ENCODE measurements at regions of chr12 and their contacts with region 1.

Region 1: GRCh38 chr12:75480469-75480949 is at the start of gene GLIPR1:
- DNase-seq: peak; percentile 54 to 83 (median 76)
- ATAC-seq: peak; percentile 86
- H3K4me3 ChIP-seq: peak within 1 kb of the TSS; percentile 82
- H3K4me3 Mint-ChIP-seq: peak within 1 kb of the TSS; percentile 86 to 99 (median 97)
- H3K27ac ChIP-seq: peak within 1 kb of the TSS; percentile 73
- H3K27ac Mint-ChIP-seq: peak within 1 kb of the TSS; percentile 92 to 100 (median 97)
- H3K4me1 ChIP-seq: peaks cover 49 to 54% of the 10 kb centered on the region in 2 donors
- H3K4me1 Mint-ChIP-seq: peaks cover 50 to 85% (median 75%) of the 10 kb centered on the region in 7 donors
- H3K27me3 ChIP-seq: no peaks in the 10 kb centered on the region
- H3K27me3 Mint-ChIP-seq: no peaks in the 10 kb centered on the region
- total RNA-seq, gene GLIPR1: 28.2 to 132 (median 48.7) TPM

Region 2: DNA sequence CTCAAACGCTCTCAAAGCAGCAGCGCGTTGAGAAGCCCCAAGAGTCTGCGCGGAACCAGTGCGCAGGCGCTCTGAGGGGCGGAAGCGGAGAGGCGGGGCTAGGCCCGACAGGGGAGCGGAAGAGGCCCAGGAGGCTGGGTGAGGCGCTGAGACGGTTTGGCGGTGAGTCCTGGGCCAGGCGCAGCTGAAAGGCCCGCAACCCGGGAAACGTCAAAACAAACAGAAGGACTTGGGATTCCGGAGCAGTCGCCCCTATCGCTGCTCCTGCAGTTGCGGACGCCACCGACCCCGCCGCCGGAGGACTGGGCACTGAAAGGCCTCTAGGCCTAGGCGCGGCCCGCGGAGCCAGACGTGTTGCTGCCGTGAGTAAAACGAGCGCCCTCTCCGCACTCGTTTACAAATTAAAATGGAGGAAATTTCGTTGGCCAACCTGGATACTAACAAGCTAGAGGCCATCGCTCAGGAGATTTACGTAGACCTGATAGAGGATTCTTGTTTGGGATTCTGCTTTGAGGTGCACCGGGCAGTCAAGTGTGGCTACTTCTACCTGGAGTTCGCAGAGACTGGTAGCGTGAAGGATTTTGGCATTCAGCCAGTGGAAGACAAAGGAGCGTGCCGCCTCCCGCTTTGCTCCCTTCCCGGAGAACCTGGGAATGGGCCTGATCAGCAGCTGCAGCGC is 942.7 kb before region 1 on chr12 and contains the start of gene ATXN7L3B:
- CTCF ChIA-PET with region 1: no interaction called
- POLR2A ChIA-PET with region 1: no interaction called
- intact Hi-C with region 1: loop called in 1 of 2 experiments (anchors 5 kb)
- DNase-seq: peak; percentile 94 to 98 (median 97)
- ATAC-seq: peak; percentile 97
- H3K4me3 ChIP-seq: peak within 1 kb of the TSS; percentile 85
- H3K4me3 Mint-ChIP-seq: peak within 1 kb of the TSS; percentile 87 to 99 (median 97)
- H3K27ac ChIP-seq: peak within 1 kb of the TSS; percentile 94
- H3K27ac Mint-ChIP-seq: peak within 1 kb of the TSS; percentile 96 to 100 (median 99)
- H3K4me1 ChIP-seq: peaks cover 27 to 32% of the 10 kb centered on the region in 2 donors
- H3K4me1 Mint-ChIP-seq: peaks cover 39 to 60% (median 54%) of the 10 kb centered on the region in 7 donors
- H3K27me3 ChIP-seq: no peaks in the 10 kb centered on the region
- H3K27me3 Mint-ChIP-seq: no peaks in the 10 kb centered on the region
- total RNA-seq, gene ATXN7L3B: 25.6 to 51.6 (median 46.9) TPM

Region 3: DNA sequence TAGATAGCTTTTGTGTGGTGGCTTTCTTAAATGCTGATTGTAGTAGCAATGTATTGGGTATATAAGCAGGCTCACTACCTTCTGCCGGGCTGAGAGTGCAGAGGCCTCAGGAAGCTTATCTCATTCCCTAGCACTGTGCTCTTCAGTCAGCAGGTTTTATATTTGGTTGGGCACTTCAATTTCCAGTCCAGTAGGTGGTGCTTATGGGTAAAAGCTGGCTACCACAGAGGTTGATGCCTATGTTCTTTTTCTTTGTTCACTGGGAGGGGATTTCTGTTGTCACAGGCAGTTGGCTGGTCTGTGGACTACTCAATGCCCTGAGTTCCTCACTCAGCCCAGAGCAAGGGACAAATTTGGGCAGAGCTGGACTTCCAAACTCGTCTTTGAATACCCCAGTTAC is 42.9 kb before region 1 on chr12:
- CTCF ChIA-PET with region 1: interaction called, 3 read pairs
- POLR2A ChIA-PET with region 1: no interaction called
- intact Hi-C with region 1: loop called (anchors 2 kb)
- DNase-seq: peak in 3 of 9 donors; percentile 9 to 39 (median 11)
- ATAC-seq: peak; percentile 89
- H3K4me3 ChIP-seq: no peak overlapping the region
- H3K4me3 Mint-ChIP-seq: no peak overlapping the region
- H3K27ac ChIP-seq: no peak overlapping the region
- H3K27ac Mint-ChIP-seq: peak overlapping the region in 1 of 9 donors; percentile 6
- H3K4me1 ChIP-seq: peaks cover 0 to 6% of the 10 kb centered on the region in 2 donors
- H3K4me1 Mint-ChIP-seq: peaks cover 0 to 14% (median 0%) of the 10 kb centered on the region in 7 donors
- H3K27me3 ChIP-seq: no peaks in the 10 kb centered on the region
- H3K27me3 Mint-ChIP-seq: peaks cover 5 to 18% (median 12%) of the 10 kb centered on the region in 5 donors

Region 4: GRCh38 chr12:75505706-75506312 is 25.3 kb after region 1 on chr12:
- CTCF ChIA-PET with region 1: interaction called, 19 read pairs
- POLR2A ChIA-PET with region 1: interaction called, 15 read pairs
- intact Hi-C with region 1: loop called (anchors 1 kb)
- DNase-seq: peak in 4 of 9 donors; percentile 18 to 42 (median 29)
- ATAC-seq: peak; percentile 75
- H3K4me3 ChIP-seq: no peak overlapping the region
- H3K4me3 Mint-ChIP-seq: no peak overlapping the region
- H3K27ac ChIP-seq: no peak overlapping the region
- H3K27ac Mint-ChIP-seq: peak overlapping the region in 4 of 9 donors; percentile 0 to 71 (median 5)
- H3K4me1 ChIP-seq: peaks cover 12 to 13% of the 10 kb centered on the region in 2 donors
- H3K4me1 Mint-ChIP-seq: peaks cover 14 to 38% (median 32%) of the 10 kb centered on the region in 7 donors
- H3K27me3 ChIP-seq: no peaks in the 10 kb centered on the region
- H3K27me3 Mint-ChIP-seq: no peaks in the 10 kb centered on the region

Region 5: DNA sequence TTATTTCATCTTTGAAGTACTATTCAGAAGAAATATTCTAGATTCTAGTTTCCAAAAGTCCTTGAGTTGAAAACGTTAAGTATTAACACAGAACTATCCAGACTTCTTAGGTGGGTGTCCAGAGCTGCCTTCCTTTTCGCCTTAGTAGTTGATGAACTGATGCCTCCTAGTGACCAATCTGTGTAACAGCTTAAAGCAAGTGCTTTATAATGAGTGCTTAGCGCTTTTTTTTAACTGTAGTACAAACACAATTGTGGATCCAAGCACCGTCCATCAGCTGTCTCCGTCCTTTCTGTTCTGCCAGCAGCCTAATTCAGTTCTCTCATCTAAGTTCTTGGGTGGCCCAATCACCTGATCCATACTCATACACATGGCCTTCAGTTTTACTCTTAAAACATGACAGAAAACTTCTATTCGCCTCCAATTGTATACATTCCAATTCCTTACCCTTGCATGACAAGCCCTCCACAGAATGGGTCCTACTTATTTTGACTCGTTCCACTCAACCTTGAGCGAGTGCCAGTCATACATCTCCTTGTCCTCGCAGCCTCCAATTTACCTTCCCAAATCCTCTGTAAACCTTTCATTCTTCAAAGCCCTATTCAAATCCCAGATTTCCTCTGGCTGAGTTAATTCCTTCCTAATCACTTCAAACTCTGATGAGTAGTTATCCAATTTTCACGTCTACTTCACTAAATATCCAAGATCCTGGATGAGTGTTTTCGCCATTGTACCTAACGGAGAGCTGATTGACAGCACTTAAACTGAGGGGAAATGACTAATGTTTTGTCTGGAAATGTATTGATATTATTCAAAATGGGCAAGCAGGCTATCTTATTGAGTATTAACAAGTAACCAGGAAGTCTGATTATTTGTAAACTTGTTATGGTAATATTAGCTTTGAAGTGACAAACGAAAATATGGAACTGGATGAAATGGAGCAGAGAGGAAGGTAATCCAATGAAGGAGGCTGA is 556.9 kb after region 1 on chr12:
- CTCF ChIA-PET with region 1: interaction called, 4 read pairs
- POLR2A ChIA-PET with region 1: interaction called, 3 read pairs
- intact Hi-C with region 1: loop called in 1 of 2 experiments (anchors 1 kb)
- DNase-seq: peak in 7 of 9 donors; percentile 46 to 63 (median 55)
- ATAC-seq: peak; percentile 87
- H3K4me3 ChIP-seq: no peak overlapping the region
- H3K4me3 Mint-ChIP-seq: no peak overlapping the region
- H3K27ac ChIP-seq: no peak overlapping the region
- H3K27ac Mint-ChIP-seq: peak overlapping the region in 1 of 9 donors; percentile 1
- H3K4me1 ChIP-seq: peaks cover 0 to 4% of the 10 kb centered on the region in 2 donors
- H3K4me1 Mint-ChIP-seq: peaks cover 5 to 29% (median 12%) of the 10 kb centered on the region in 7 donors
- H3K27me3 ChIP-seq: no peaks in the 10 kb centered on the region
- H3K27me3 Mint-ChIP-seq: no peaks in the 10 kb centered on the region